ENCODE measurements at regions of chr16 and their contacts with region 1.

Region 1: DNA sequence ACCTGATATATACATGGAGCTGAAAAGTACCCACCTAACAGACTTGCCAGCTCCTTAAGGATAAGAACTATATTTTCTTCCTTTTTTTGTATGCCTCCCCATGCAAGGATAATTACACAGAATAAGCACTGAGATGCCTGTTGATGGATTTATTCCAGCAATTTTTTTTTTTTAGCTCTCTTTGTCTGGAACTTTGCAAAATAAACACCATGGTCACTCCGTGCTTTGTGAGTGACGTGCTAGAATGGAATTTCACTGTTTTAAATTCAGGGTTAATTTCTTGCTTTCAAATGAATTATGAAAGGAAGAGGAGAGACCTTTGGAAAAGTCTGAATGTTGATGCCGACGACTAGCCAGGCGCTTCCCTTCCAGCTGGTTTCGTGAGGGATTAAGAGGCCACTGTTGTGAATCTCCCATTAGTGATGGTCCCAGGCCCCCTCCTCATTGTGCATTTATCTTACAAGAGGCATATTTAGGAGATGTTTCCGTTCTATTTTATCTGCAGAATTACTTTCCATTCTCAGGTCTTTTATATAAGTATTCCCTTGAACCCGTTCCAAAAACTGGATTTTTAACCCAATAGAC is 529.1 kb downstream of the WWOX start:
- DNase-seq: no peak
- ATAC-seq: no peak
- H3K4me3 ChIP-seq: no peak overlapping the region
- H3K27ac ChIP-seq: peak overlapping the region in 1 of 4 donors; percentile 45
- H3K4me1 ChIP-seq: peaks cover 14 to 29% of the 10 kb centered on the region in 2 donors
- H3K27me3 ChIP-seq: no peaks in the 10 kb centered on the region
- CTCF ChIP-seq: no peak
- POLR2A ChIP-seq: no peak

Region 2: DNA sequence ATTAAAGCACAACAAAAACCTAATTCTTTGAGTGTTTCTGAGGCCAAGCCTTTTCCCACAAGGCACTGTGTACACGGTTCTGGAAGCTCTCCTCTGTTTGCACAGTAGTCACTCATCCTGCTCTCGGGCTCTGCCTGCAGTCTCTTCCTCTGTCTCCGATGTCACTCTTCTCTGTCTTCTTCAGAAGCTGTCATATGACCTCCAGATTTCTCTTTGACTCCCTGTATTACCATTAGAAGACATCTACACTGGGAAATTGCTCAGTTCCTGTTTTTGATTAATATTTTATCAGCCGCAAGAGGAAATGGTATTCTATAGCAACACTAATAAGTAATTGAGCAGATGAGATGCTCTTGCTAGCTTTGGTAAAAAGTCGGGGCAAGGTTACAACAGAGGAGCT is 106.2 kb before region 1 on chr16:
- in situ Hi-C with region 1: no loop called
- intact Hi-C with region 1: no loop called
- DNase-seq: no peak
- ATAC-seq: no peak
- H3K4me3 ChIP-seq: no peak overlapping the region
- H3K27ac ChIP-seq: no peak overlapping the region
- H3K4me1 ChIP-seq: no peaks in the 10 kb centered on the region
- H3K27me3 ChIP-seq: no peaks in the 10 kb centered on the region
- CTCF ChIP-seq: no peak
- POLR2A ChIP-seq: no peak

Region 3: GRCh38 chr16:78563905-78564304 is 64.6 kb before region 1 on chr16:
- in situ Hi-C with region 1: no loop called
- intact Hi-C with region 1: no loop called
- DNase-seq: peak; percentile 22 to 52
- ATAC-seq: peak; percentile 73 to 77
- H3K4me3 ChIP-seq: no peak overlapping the region
- H3K27ac ChIP-seq: no peak overlapping the region
- H3K4me1 ChIP-seq: peaks cover 0 to 8% of the 10 kb centered on the region in 2 donors
- H3K27me3 ChIP-seq: no peaks in the 10 kb centered on the region
- CTCF ChIP-seq: no peak
- POLR2A ChIP-seq: no peak

Region 4: GRCh38 chr16:78659943-78660217 is 31.3 kb after region 1 on chr16:
- in situ Hi-C with region 1: no loop called
- intact Hi-C with region 1: loop called (anchors 2 kb)
- DNase-seq: no peak
- ATAC-seq: no peak
- H3K4me3 ChIP-seq: no peak overlapping the region
- H3K27ac ChIP-seq: no peak overlapping the region
- H3K4me1 ChIP-seq: peaks cover 6 to 12% of the 10 kb centered on the region in 2 donors
- H3K27me3 ChIP-seq: no peaks in the 10 kb centered on the region
- CTCF ChIP-seq: no peak
- POLR2A ChIP-seq: no peak

Region 5: GRCh38 chr16:78684040-78684611 is 55.6 kb after region 1 on chr16:
- in situ Hi-C with region 1: no loop called
- intact Hi-C with region 1: loop called (anchors 1 kb)
- DNase-seq: peak; percentile 78 to 88
- ATAC-seq: peak; percentile 93 to 97
- H3K4me3 ChIP-seq: no peak overlapping the region
- H3K27ac ChIP-seq: peak overlapping the region; percentile 68 to 73 (median 70)
- H3K4me1 ChIP-seq: peaks cover 6 to 23% of the 10 kb centered on the region in 2 donors
- H3K27me3 ChIP-seq: no peaks in the 10 kb centered on the region
- CTCF ChIP-seq: no peak
- POLR2A ChIP-seq: no peak

Region 6: GRCh38 chr16:78770353-78771091 is 142.0 kb after region 1 on chr16:
- in situ Hi-C with region 1: no loop called
- intact Hi-C with region 1: loop called (anchors 10 kb)
- DNase-seq: peak; percentile 33 to 58
- ATAC-seq: peak; percentile 58 to 79
- H3K4me3 ChIP-seq: no peak overlapping the region
- H3K27ac ChIP-seq: no peak overlapping the region
- H3K4me1 ChIP-seq: peaks cover 3 to 13% of the 10 kb centered on the region in 2 donors
- H3K27me3 ChIP-seq: no peaks in the 10 kb centered on the region
- CTCF ChIP-seq: peak; percentile 66 to 93 (median 85)
- POLR2A ChIP-seq: no peak